Aorta (tissue), 5 donors: ENCODE measurements at regions of chr1 and their contacts with region 1.

Region 1: DNA sequence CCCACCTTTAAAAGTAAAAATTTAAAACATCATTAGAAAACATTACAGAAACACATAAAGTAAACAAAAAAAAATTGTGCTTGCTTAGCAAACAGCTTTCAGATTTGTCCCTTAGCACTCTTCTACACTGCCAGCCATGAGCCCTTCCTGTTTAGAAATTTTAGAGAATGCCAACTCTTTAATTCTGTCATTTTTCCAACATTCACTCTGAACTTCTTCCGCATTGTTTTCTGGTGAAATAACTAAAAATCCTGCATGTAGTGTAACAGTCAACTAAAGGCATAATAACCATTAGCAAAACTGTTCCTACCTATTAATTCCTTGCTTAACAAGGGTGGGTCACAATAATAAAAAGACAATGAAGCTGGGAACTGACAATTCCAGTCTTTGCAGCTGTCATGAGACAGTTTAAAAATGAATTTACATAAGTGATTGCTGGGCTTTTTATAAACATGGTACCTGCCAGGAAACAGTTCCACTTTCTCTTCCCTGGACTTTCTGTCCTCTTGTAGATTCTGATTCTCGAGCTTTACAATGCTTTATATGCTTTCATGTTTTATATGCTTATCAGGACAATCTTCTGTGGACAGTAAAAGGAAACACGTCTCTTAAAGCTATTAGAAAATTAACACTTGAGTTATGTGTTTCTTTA is 19.0 kb downstream of the GNG12 start:
- DNase-seq: no peak
- ATAC-seq: peak; percentile 53
- H3K4me3 ChIP-seq: no peak overlapping the region
- H3K27ac ChIP-seq: peak overlapping the region; percentile 53 to 61
- H3K4me1 ChIP-seq: peaks cover 11 to 19% of the 10 kb centered on the region in 2 donors
- H3K27me3 ChIP-seq: no peaks in the 10 kb centered on the region

Region 2: GRCh38 chr1:67777440-67777839 is 36.8 kb before region 1 on chr1:
- intact Hi-C with region 1: loop called in 1 of 2 experiments (anchors 5 kb)
- DNase-seq: no peak
- ATAC-seq: peak; percentile 70
- H3K4me3 ChIP-seq: no peak overlapping the region
- H3K27ac ChIP-seq: peak overlapping the region; percentile 77 to 90
- H3K4me1 ChIP-seq: peaks cover 7 to 20% of the 10 kb centered on the region in 2 donors
- H3K27me3 ChIP-seq: no peaks in the 10 kb centered on the region

Region 3: DNA sequence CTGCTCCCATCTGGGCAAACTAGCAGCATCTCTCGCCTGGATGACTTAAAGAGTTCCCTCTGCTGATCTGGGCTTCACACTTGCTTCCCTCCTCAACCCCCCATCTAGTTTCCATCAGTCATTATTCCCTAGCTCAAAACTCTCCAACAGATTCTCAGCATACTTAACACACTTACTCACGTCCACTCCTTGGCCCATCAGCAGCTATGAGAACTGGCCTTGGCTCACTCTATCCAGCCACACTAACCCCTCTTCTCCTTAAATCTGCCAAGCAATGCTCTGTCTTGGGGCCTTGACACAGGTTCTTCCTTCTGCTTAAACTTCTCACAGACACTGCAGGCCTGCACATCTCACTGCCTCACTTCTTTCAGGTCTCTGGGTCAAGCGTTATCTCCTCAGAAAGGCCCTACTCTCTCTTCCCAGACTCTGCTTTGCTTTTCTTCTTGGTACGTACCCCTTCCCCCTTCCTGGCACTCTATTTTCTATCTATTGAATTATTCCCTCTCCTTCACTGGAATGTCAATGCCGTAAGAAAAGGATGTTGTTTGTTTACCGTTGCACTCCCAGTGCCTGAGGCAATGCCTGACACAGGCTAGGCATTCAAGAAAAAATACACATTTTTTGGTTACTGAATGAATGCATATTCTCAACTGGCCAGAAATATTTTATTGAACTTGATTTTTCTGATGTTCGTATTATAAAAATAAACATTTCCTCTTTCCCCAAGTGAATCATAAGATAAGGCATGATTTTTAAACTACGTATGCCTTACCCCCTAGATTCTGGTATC is 22.4 kb before region 1 on chr1:
- intact Hi-C with region 1: loop called in 1 of 2 experiments (anchors 1 kb)
- DNase-seq: peak in 1 of 2 donors; percentile 69
- ATAC-seq: peak; percentile 84
- H3K4me3 ChIP-seq: no peak overlapping the region
- H3K27ac ChIP-seq: peak overlapping the region; percentile 84 to 99
- H3K4me1 ChIP-seq: peaks cover 12 to 30% of the 10 kb centered on the region in 2 donors
- H3K27me3 ChIP-seq: no peaks in the 10 kb centered on the region

Region 4: DNA sequence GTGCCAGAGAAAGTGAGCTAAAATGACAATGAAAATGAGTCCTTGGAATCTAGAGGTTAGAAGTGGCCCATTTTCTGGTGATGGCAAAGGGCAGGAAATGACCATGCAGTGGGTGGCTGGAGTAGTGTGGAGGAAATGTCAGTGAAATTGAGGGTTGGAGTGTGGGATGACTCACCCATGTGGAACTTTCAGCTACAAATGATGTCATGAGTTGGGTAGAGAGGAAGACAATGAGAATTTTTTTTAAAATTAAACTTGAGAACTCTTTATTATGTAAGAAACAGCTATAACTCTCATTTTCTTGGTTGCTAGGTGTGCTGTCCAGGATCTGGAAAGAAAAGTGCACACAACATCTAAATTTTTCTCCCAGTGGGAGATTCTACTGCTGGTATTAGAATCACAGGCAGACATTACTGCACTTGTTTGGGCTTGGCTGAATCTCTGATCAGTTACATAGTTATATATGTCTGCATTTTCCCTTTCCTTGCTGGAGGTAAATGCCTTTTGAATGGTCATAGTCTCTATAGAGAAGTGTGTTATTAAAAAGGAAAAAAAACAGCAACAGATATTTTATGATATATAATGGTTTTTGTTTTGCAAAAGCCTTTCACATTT is 75.8 kb after region 1 on chr1:
- intact Hi-C with region 1: no loop called
- DNase-seq: no peak
- ATAC-seq: peak; percentile 54
- H3K4me3 ChIP-seq: no peak overlapping the region
- H3K27ac ChIP-seq: no peak overlapping the region
- H3K4me1 ChIP-seq: no peaks in the 10 kb centered on the region
- H3K27me3 ChIP-seq: no peaks in the 10 kb centered on the region

Region 5: GRCh38 chr1:67923074-67923473 is 108.8 kb after region 1 on chr1:
- intact Hi-C with region 1: no loop called
- DNase-seq: no peak
- ATAC-seq: no peak
- H3K4me3 ChIP-seq: no peak overlapping the region
- H3K27ac ChIP-seq: no peak overlapping the region
- H3K4me1 ChIP-seq: no peaks in the 10 kb centered on the region
- H3K27me3 ChIP-seq: no peaks in the 10 kb centered on the region